Left lung (tissue), 14 donors: ENCODE measurements at regions of chr10 and their contacts with region 1.

Region 1: GRCh38 chr10:43348511-43349312 is 22.7 kb upstream of the FXYD4 start:
- DNase-seq: peak; percentile 76 to 92 (median 90)
- ATAC-seq: peak; percentile 100
- H3K4me3 ChIP-seq: no peak overlapping the region
- H3K27ac ChIP-seq: no peak overlapping the region
- H3K4me1 ChIP-seq: peaks cover 0 to 5% of the 10 kb centered on the region in 2 donors
- H3K27me3 ChIP-seq: peaks cover 0 to 36% of the 10 kb centered on the region in 2 donors
- CTCF ChIP-seq: peak; percentile 86 to 92

Region 2: GRCh38 chr10:43138021-43138756 is 210.5 kb before region 1 on chr10 and contains the start of gene CSGALNACT2:
- intact Hi-C with region 1: no loop called
- DNase-seq: peak; percentile 87 to 97 (median 90)
- ATAC-seq: peak; percentile 94
- H3K4me3 ChIP-seq: peak within 1 kb of the TSS; percentile 82 to 96
- H3K27ac ChIP-seq: peak within 1 kb of the TSS; percentile 96 to 97
- H3K4me1 ChIP-seq: peaks cover 25 to 58% of the 10 kb centered on the region in 2 donors
- H3K27me3 ChIP-seq: no peaks in the 10 kb centered on the region
- CTCF ChIP-seq: no peak
- polyA plus RNA-seq, gene CSGALNACT2: 31.4 to 45.0 (median 36.6) TPM

Region 3: GRCh38 chr10:43292755-43293676 is 55.7 kb before region 1 on chr10:
- intact Hi-C with region 1: loop called in 1 of 2 experiments (anchors 10 kb)
- DNase-seq: peak in 3 of 4 donors; percentile 37 to 67 (median 56)
- ATAC-seq: peak; percentile 94
- H3K4me3 ChIP-seq: no peak overlapping the region
- H3K27ac ChIP-seq: no peak overlapping the region
- H3K4me1 ChIP-seq: peaks cover 3 to 20% of the 10 kb centered on the region in 2 donors
- H3K27me3 ChIP-seq: no peaks in the 10 kb centered on the region
- CTCF ChIP-seq: peak; percentile 74

Region 4: GRCh38 chr10:43396928-43397624 is 48.4 kb after region 1 on chr10:
- intact Hi-C with region 1: no loop called
- DNase-seq: peak; percentile 75 to 97 (median 90)
- ATAC-seq: peak; percentile 89
- H3K4me3 ChIP-seq: peak overlapping the region; percentile 54 to 68
- H3K27ac ChIP-seq: peak overlapping the region; percentile 98 to 99
- H3K4me1 ChIP-seq: peaks cover 27 to 81% of the 10 kb centered on the region in 2 donors
- H3K27me3 ChIP-seq: no peaks in the 10 kb centered on the region
- CTCF ChIP-seq: no peak